CD8-positive, alpha-beta T cell (primary cell): ENCODE measurements at regions of chrX and their contacts with region 1.

Region 1: GRCh38 chrX:49237060-49237459 is 1.8 kb downstream of the CCDC22 start:
- DNase-seq: peak in 1 of 9 experiments; percentile 20
- ATAC-seq: no peak
- H3K4me3 ChIP-seq: no peak overlapping the region
- H3K4me3 Mint-ChIP-seq: peak overlapping the region; percentile 92
- H3K27ac ChIP-seq: peak overlapping the region in 1 of 2 experiments; percentile 12
- H3K27ac Mint-ChIP-seq: peak overlapping the region; percentile 69
- H3K4me1 ChIP-seq: peaks cover 14% of the 10 kb centered on the region
- H3K4me1 Mint-ChIP-seq: peaks cover 28% of the 10 kb centered on the region
- H3K27me3 ChIP-seq: no peaks in the 10 kb centered on the region
- H3K27me3 Mint-ChIP-seq: no peaks in the 10 kb centered on the region
- CTCF ChIP-seq: no peak

Region 2: GRCh38 chrX:49199906-49200771 is 36.9 kb before region 1 on chrX and contains the start of gene SYP:
- CTCF ChIA-PET with region 1: no interaction called
- POLR2A ChIA-PET with region 1: no interaction called
- intact Hi-C with region 1: loop called (anchors 5 kb)
- DNase-seq: peak; percentile 71 to 92 (median 88)
- ATAC-seq: peak; percentile 99
- H3K4me3 ChIP-seq: peak within 1 kb of the TSS; percentile 39 to 50
- H3K4me3 Mint-ChIP-seq: peak within 1 kb of the TSS; percentile 72
- H3K27ac ChIP-seq: peak within 1 kb of the TSS; percentile 53 to 54
- H3K27ac Mint-ChIP-seq: peak within 1 kb of the TSS; percentile 82
- H3K4me1 ChIP-seq: no peaks in the 10 kb centered on the region
- H3K4me1 Mint-ChIP-seq: peaks cover 14% of the 10 kb centered on the region
- H3K27me3 ChIP-seq: no peaks in the 10 kb centered on the region
- H3K27me3 Mint-ChIP-seq: no peaks in the 10 kb centered on the region
- CTCF ChIP-seq: no peak
- total RNA-seq, gene SYP: 0.44 to 0.65 TPM

Region 3: DNA sequence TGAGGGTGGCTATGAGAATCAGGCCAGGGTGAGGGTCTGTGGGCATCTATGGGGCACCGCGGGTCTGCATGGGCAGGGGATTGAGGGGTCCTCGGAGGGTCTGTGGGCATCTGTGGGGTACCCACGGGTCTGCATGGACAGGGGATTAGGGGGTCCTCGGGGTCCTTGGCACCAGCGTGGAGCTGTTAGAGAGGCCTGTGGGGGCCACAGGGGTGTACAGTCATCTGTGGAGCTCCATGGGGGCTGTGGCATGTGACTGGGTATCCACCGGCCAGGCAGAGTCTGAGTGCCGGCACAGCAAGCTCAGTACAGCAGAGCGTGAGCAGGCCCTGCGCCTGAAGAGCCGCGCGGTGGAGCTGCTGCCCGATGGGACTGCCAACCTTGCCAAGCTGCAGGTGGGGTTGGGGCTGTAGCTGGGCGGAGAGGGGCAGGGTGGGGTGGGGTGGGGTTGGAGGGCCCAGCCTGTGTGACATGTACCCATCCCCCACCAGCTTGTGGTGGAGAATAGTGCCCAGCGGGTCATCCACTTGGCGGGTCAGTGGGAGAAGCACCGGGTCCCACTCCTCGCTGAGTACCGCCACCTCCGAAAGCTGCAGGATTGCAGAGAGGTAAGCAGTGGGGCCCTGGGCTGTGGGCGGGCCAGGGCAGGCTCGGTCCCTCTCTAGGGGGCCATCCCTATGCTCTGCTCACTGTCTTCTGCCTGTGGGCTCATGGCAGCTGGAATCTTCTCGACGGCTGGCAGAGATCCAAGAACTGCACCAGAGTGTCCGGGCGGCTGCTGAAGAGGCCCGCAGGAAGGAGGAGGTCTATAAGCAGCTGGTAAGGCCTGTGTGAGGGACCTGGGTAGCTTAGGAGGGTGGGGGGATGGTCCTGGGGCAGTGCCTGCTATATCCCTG is 11.1 kb after region 1 on chrX:
- CTCF ChIA-PET with region 1: no interaction called
- POLR2A ChIA-PET with region 1: interaction called, 10 read pairs
- intact Hi-C with region 1: no loop called
- DNase-seq: no peak
- ATAC-seq: no peak
- H3K4me3 ChIP-seq: no peak overlapping the region
- H3K4me3 Mint-ChIP-seq: no peak overlapping the region
- H3K27ac ChIP-seq: no peak overlapping the region
- H3K27ac Mint-ChIP-seq: no peak overlapping the region
- H3K4me1 ChIP-seq: no peaks in the 10 kb centered on the region
- H3K4me1 Mint-ChIP-seq: peaks cover 7% of the 10 kb centered on the region
- H3K27me3 ChIP-seq: no peaks in the 10 kb centered on the region
- H3K27me3 Mint-ChIP-seq: no peaks in the 10 kb centered on the region
- CTCF ChIP-seq: no peak